IMR-90 (cell line): ENCODE measurements at regions of chr3 and their contacts with region 1.

Region 1: GRCh38 chr3:55467099-55467498 is 20.0 kb downstream of the WNT5A start:
- DNase-seq: peak; percentile 76
- ATAC-seq: peak; percentile 7; the same call in 1 of the 2 replicates
- H3K4me3 ChIP-seq: no peak overlapping the region
- H3K27ac ChIP-seq: peak overlapping the region; percentile 57; the same call in 1 of the 2 replicates
- H3K4me1 ChIP-seq: peaks cover 16% of the 10 kb centered on the region
- H3K27me3 ChIP-seq: no peaks in the 10 kb centered on the region
- CTCF ChIP-seq: no peak
- POLR2A ChIP-seq: 0 out of 2 replicates have a peak, but pooled peaks have one; percentile 6
- RAD21 ChIP-seq: no peak

Region 2: GRCh38 chr3:55305696-55306485 is 161.2 kb before region 1 on chr3:
- CTCF ChIA-PET with region 1: no interaction called
- POLR2A ChIA-PET with region 1: interaction called, 10 read pairs
- dilution Hi-C with region 1: no loop called
- in situ Hi-C with region 1: no loop called
- intact Hi-C with region 1: no loop called
- DNase-seq: peak; percentile 57
- ATAC-seq: peak; percentile 77
- H3K4me3 ChIP-seq: no peak overlapping the region
- H3K27ac ChIP-seq: peak overlapping the region; percentile 67; the same call in 1 of the 2 replicates
- H3K4me1 ChIP-seq: peaks cover 3% of the 10 kb centered on the region; the same call in 1 of the 2 replicates
- H3K27me3 ChIP-seq: no peaks in the 10 kb centered on the region
- CTCF ChIP-seq: no peak
- POLR2A ChIP-seq: no peak
- RAD21 ChIP-seq: no peak